RWPE1 (cell line): ENCODE measurements at regions of chr9 and their contacts with region 1.

Region 1: GRCh38 chr9:35611230-35611797 is 6.3 kb downstream of the TESK1 start:
- DNase-seq: peak; percentile 18
- H3K27ac ChIP-seq: no peak overlapping the region
- CTCF ChIP-seq: peak; percentile 89

Region 2: DNA sequence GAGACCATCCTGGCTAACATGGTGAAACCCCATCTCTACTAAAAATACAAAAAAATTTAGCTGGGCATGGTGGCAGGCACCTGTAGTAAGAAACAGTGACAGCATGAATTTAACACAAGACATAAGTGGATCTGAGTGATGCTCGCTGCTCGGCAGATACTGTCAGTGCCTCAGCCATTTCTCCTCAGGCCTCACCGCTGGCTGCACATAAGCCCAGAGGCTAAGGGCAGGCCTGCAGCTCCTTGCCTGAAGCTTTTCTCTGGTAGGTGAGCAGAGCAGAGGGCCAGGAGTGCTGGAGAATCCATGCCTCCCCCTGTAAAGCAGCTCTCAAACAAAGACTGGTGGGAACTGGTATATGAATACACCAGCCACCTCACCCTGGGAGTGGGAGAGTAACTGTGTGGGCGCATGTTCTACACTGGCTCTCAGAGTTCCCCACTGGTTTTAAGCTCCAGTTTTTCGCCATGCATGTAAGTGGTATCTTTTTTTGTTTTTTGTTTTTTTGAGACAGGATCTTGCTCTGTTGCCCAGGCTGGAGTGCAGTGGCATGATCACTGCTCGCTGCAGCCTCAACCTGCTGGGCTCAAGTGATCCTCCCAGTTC is 17.2 kb after region 1 on chr9:
- CTCF ChIA-PET with region 1: interaction called, 12 read pairs
- POLR2A ChIA-PET with region 1: no interaction called
- DNase-seq: no peak
- H3K27ac ChIP-seq: no peak overlapping the region
- CTCF ChIP-seq: no peak